ENCODE measurements at regions of chr3 and their contacts with region 1.

Region 1: GRCh38 chr3:184145111-184145524 is 10.0 kb downstream of the EIF2B5 start:
- DNase-seq: peak in 1 of 4 donors; percentile 51
- ATAC-seq: peak; percentile 97
- H3K4me3 ChIP-seq: no peak overlapping the region
- H3K27ac ChIP-seq: no peak overlapping the region
- H3K4me1 ChIP-seq: no peaks in the 10 kb centered on the region
- H3K27me3 ChIP-seq: no peaks in the 10 kb centered on the region
- CTCF ChIP-seq: peak; percentile 23 to 24

Region 2: GRCh38 chr3:184229394-184230080 is 84.4 kb after region 1 on chr3 and contains the start of gene VWA5B2:
- intact Hi-C with region 1: loop called in 1 of 2 experiments (anchors 10 kb)
- DNase-seq: peak in 2 of 4 donors; percentile 59 to 86
- ATAC-seq: peak; percentile 84
- H3K4me3 ChIP-seq: peak within 1 kb of the TSS; percentile 27 to 40
- H3K27ac ChIP-seq: no peak within 1 kb of the TSS
- H3K4me1 ChIP-seq: peaks cover 12 to 23% of the 10 kb centered on the region in 2 donors
- H3K27me3 ChIP-seq: peaks cover 46 to 98% of the 10 kb centered on the region in 2 donors
- CTCF ChIP-seq: peak in 1 of 2 donors; percentile 37
- polyA plus RNA-seq, gene VWA5B2: 0.85 to 2.4 (median 1.4) TPM

Region 3: DNA sequence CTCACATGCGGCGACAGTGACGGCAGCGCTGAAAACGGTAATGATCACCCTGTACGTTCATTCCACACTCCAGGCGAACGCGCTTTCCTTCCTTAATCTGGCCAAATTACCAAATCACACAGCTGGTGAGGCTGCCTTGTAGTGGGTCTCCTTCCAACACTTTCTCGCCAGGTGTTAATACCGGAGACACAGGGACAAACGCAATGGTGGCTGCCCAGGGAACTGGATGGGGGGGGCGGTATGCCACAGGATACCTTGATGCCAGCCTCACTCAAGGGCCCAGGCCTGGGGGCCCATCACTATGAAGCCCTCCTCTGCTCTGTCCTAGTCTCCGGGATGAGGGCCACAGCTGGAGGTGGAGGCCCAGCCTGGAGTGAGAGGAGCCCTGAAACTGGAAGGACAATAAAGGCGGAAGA is 117.7 kb after region 1 on chr3:
- intact Hi-C with region 1: no loop called
- DNase-seq: no peak
- ATAC-seq: no peak
- H3K4me3 ChIP-seq: no peak overlapping the region
- H3K27ac ChIP-seq: no peak overlapping the region
- H3K4me1 ChIP-seq: peaks cover 16 to 31% of the 10 kb centered on the region in 2 donors
- H3K27me3 ChIP-seq: peaks cover 22 to 88% of the 10 kb centered on the region in 2 donors
- CTCF ChIP-seq: no peak

Region 4: DNA sequence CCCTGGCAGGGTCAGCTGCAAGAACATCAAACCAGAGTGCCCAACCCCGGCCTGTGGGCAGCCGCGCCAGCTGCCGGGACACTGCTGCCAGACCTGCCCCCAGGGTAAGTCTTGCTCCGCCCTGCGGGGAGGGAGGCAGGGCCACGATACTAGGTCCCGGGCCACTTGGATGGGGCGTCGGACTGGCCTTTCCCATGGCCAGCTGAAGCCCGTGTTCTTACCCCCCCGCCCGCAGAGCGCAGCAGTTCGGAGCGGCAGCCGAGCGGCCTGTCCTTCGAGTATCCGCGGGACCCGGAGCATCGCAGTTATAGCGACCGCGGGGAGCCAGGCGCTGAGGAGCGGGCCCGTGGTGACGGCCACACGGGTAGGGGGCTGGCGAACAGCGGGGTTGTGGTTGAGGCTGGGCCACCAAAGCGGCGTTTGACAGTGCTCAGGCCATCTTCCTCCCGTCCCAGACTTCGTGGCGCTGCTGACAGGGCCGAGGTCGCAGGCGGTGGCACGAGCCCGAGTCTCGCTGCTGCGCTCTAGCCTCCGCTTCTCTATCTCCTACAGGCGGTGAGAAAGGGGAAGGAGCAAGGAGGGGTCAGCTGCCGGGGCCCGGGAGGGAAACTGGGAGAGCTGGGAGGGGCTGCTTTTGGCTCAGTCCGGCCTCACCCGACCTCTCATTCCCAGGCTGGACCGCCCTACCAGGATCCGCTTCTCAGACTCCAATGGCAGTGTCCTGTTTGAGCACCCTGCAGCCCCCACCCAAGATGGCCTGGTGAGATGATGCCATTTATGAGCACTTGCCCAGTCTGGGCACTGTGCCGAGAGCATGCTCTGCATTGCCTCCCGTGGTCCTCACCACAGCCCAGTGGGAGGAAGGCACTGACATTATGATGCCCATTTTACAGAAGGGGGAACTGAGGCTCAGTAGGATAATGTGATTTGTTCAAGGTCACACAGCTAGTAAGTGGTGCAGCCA is 236.4 kb after region 1 on chr3:
- intact Hi-C with region 1: no loop called
- DNase-seq: peak in 2 of 4 donors; percentile 28 to 80
- ATAC-seq: peak; percentile 49
- H3K4me3 ChIP-seq: peak overlapping the region in 1 of 2 donors; percentile 31
- H3K27ac ChIP-seq: no peak overlapping the region
- H3K4me1 ChIP-seq: peaks cover 11 to 23% of the 10 kb centered on the region in 2 donors
- H3K27me3 ChIP-seq: peaks cover 16 to 77% of the 10 kb centered on the region in 2 donors
- CTCF ChIP-seq: no peak

Region 5: GRCh38 chr3:185176750-185177359 is 1031.7 kb after region 1 on chr3:
- intact Hi-C with region 1: no loop called
- DNase-seq: peak in 2 of 4 donors; percentile 37 to 54
- ATAC-seq: peak; percentile 69
- H3K4me3 ChIP-seq: no peak overlapping the region
- H3K27ac ChIP-seq: no peak overlapping the region
- H3K4me1 ChIP-seq: peaks cover 5 to 16% of the 10 kb centered on the region in 2 donors
- H3K27me3 ChIP-seq: no peaks in the 10 kb centered on the region
- CTCF ChIP-seq: peak; percentile 59 to 63

Measured in left lung (tissue), 14 donors.